AG04450 (cell line): ENCODE measurements at regions of chr2 and their contacts with region 1.

Region 1: GRCh38 chr2:240045098-240045497 is 8.2 kb downstream of the OR6B3 start:
- DNase-seq: no peak
- H3K4me3 ChIP-seq: no peak overlapping the region
- H3K27ac ChIP-seq: no peak overlapping the region
- H3K27me3 ChIP-seq: peaks cover 16% of the 10 kb centered on the region
- CTCF ChIP-seq: no peak

Region 2: DNA sequence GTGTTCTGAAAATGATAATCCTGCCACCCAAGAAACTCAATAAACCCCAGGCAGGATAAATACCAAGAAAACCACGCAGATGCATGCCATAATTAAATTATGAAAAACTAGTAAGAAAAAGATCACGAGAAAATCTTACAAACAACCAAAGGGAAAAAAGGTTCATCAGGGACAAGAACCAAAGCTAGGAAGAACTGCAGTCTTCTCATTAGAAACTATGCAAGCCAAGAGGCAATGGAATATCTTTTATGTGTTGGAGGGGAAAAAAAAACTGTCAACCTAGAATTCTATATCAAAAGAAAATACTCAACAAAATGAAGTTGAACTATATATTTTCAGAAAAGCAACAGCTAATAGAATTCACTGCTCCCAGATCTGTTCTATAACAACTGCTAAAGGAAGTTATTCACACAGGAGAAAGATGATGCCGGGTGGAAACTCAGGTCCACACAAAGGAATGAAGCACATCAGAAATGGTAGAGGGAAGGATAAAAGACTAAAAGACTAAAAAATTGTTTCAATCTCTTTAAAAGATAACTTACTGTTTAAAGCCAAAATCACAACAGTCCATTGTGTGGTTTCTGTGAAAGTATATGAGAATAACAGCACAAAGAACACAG is 75.0 kb before region 1 on chr2:
- CTCF ChIA-PET with region 1: no interaction called
- POLR2A ChIA-PET with region 1: no interaction called
- DNase-seq: no peak
- H3K4me3 ChIP-seq: no peak overlapping the region
- H3K27ac ChIP-seq: no peak overlapping the region
- H3K27me3 ChIP-seq: no peaks in the 10 kb centered on the region
- CTCF ChIP-seq: no peak

Region 3: GRCh38 chr2:240245706-240246105 is 200.6 kb after region 1 on chr2:
- CTCF ChIA-PET with region 1: interaction called, 10 read pairs
- POLR2A ChIA-PET with region 1: no interaction called
- DNase-seq: no peak
- H3K4me3 ChIP-seq: no peak overlapping the region
- H3K27ac ChIP-seq: no peak overlapping the region
- H3K27me3 ChIP-seq: no peaks in the 10 kb centered on the region
- CTCF ChIP-seq: no peak

Region 4: GRCh38 chr2:240320204-240320993 is 275.3 kb after region 1 on chr2:
- CTCF ChIA-PET with region 1: no interaction called
- POLR2A ChIA-PET with region 1: no interaction called
- DNase-seq: peak; percentile 89
- H3K4me3 ChIP-seq: no peak overlapping the region
- H3K27ac ChIP-seq: peak overlapping the region; percentile 75
- H3K27me3 ChIP-seq: peaks cover 2% of the 10 kb centered on the region
- CTCF ChIP-seq: no peak

Region 5: DNA sequence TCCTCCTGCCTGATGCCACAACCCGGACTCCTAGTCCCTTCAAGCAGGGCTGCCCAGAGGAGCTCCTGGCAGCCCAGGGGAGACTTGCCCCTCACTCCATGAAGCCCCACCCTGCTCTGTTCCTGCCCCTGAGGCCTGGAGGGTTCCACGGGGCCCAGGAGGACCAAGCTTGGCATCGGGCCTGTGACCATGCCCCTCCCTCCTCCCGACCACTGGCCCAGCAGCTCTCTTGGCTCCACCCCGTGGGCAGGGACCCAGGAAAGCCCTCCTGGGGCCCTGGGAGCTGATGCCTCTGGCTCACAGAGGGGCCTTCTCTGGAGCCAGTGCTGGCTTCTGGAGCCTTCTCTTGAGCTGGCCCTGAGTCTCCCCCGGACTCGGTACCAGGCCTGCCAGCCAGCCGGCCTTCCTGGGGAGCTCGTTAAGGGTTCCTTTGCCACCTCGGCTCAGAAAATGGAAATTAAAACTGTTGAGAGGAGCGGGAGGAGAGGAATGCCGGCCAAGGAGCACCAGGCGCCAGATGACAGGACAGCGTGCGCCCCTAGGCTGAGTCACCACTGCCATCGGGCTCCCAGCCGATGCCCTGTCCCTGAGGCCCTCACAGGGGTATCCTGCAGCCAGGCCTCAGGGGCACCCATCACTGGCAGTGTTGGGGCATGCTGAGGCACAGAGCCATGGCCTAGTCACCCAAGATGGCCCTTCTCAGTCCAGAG is 912.7 kb after region 1 on chr2:
- CTCF ChIA-PET with region 1: no interaction called
- POLR2A ChIA-PET with region 1: no interaction called
- DNase-seq: no peak
- H3K4me3 ChIP-seq: no peak overlapping the region
- H3K27ac ChIP-seq: no peak overlapping the region
- H3K27me3 ChIP-seq: peaks cover 46% of the 10 kb centered on the region
- CTCF ChIP-seq: no peak